ENCODE measurements at regions of chr19 and their contacts with region 1.

Region 1: DNA sequence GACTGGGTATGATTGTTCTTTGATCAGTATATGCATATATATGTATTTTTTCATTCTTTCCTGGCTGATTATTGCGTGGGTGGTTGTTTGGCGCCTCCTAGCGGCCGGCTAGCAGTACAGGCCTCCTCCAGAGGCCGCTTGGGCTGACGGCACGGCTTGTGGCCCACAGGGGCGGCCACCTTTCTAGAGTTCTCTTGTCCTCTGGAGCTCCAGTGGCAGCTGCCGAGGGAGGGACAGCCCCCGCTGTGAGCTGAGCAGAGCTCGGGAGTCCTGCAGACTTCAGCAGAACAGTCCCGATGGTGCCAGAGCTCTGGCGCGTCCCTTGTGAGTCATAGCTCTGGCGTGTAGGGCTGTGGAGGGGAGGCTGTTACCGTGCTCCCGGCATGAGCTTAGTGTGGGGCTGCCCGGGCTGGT is 22.5 kb upstream of the ZNF429 start:
- DNase-seq: peak; percentile 56 to 73 (median 66)
- H3K4me3 ChIP-seq: no peak overlapping the region
- H3K4me3 Mint-ChIP-seq: peak overlapping the region in 2 of 8 donors; percentile 6 to 57
- H3K27ac ChIP-seq: no peak overlapping the region
- H3K27ac Mint-ChIP-seq: no peak overlapping the region
- H3K4me1 ChIP-seq: no peaks in the 10 kb centered on the region
- H3K4me1 Mint-ChIP-seq: peaks cover 0 to 2% (median 0%) of the 10 kb centered on the region in 4 donors
- H3K27me3 ChIP-seq: no peaks in the 10 kb centered on the region
- H3K27me3 Mint-ChIP-seq: no peaks in the 10 kb centered on the region

Region 2: DNA sequence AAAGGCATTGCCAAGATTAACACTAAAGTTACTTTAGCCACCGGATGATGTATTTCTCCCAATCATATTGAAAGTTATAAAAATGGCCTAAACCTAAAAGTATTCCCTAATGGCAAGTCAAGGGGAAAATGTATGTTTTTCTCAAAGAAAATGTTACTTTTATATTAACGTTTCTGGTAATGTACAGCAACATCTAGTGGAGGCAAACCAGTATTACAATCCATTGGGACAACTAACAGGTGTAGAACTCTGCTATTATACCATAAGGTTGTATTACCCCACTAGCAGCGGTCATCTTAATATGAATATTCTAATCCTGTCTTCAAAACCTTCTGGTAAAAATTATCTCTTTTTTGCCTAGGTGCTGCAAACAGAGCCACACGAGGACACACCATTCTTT is 215.3 kb after region 1 on chr19:
- CTCF ChIA-PET with region 1: interaction called, 10 read pairs
- POLR2A ChIA-PET with region 1: no interaction called
- intact Hi-C with region 1: no loop called
- DNase-seq: peak; percentile 19 to 29 (median 25)
- H3K4me3 ChIP-seq: no peak overlapping the region
- H3K4me3 Mint-ChIP-seq: no peak overlapping the region
- H3K27ac ChIP-seq: no peak overlapping the region
- H3K27ac Mint-ChIP-seq: no peak overlapping the region
- H3K4me1 ChIP-seq: no peaks in the 10 kb centered on the region
- H3K4me1 Mint-ChIP-seq: no peaks in the 10 kb centered on the region
- H3K27me3 ChIP-seq: no peaks in the 10 kb centered on the region
- H3K27me3 Mint-ChIP-seq: no peaks in the 10 kb centered on the region

Region 3: DNA sequence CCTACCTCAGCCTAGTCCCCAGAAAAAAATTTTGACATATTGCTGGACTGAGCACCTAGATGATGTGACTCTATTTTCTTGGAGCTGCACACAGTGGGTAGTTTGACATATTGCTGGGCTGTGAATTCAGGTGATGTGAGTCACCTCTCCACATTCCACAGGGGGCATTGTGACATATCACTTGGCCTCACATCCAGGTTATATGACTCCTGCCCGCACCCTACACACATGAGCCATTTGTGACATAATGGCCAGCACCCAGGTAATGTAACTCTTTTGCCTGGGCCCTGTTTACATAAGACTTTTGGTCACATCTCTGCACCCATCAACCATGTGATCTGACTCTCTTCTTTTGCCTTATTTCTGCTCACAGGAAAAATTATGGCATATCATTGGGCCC is 408.2 kb after region 1 on chr19:
- CTCF ChIA-PET with region 1: no interaction called
- POLR2A ChIA-PET with region 1: no interaction called
- intact Hi-C with region 1: loop called (anchors 10 kb)
- DNase-seq: no peak
- H3K4me3 ChIP-seq: no peak overlapping the region
- H3K4me3 Mint-ChIP-seq: no peak overlapping the region
- H3K27ac ChIP-seq: no peak overlapping the region
- H3K27ac Mint-ChIP-seq: no peak overlapping the region
- H3K4me1 ChIP-seq: no peaks in the 10 kb centered on the region
- H3K4me1 Mint-ChIP-seq: peaks cover 0 to 2% (median 0%) of the 10 kb centered on the region in 4 donors
- H3K27me3 ChIP-seq: no peaks in the 10 kb centered on the region
- H3K27me3 Mint-ChIP-seq: peaks cover 0 to under 1% of the 10 kb centered on the region in 2 donors